ENCODE measurements at regions of chr7 and their contacts with region 1.

Region 1: DNA sequence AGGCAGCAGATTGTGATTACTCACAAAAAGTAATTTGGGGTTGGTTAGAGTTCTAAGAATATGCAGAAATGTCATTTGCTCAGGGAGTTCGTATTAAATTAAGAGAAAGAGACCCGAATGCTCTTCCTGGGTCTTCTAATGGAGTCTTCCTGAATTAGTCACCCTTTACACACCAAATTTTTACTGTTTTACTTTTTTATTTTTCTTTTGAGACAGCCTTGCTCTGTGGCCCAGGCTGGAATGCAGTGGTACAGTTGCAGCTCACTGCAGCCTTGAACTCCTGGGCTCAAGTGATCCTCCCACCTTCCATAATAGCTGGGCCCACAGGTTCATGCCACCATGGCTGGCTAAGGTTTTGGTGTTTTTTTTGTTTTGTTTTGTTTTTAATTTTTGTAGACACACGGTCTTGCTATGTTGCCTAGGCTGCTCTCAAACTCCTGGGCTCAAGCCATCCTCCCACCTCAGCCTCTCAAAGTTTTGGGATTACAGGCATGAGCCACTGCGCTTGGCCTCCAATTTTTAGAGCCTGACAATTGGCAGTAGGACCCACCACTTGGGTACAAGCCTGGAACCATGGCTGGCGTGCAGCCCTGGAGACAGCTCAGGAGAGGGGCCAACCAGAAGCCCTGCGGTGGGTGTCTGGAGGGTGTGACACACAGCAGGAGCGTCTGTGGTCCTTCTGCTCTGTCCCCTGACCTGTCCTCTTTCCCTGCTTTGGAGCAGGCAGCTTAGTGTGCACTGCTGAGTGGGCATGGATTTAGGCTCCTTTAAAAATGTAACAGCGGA is 16.4 kb upstream of the BHLHA15 start:
- DNase-seq: no peak
- H3K4me3 ChIP-seq: no peak overlapping the region
- H3K27ac ChIP-seq: no peak overlapping the region
- H3K4me1 ChIP-seq: peaks cover 0 to 30% (median 17%) of the 10 kb centered on the region in 6 donors
- H3K27me3 ChIP-seq: no peaks in the 10 kb centered on the region
- CTCF ChIP-seq: no peak
- POLR2A ChIP-seq: no peak

Region 2: GRCh38 chr7:98157761-98158160 is 37.1 kb before region 1 on chr7:
- intact Hi-C with region 1: no loop called
- DNase-seq: no peak
- H3K4me3 ChIP-seq: no peak overlapping the region
- H3K27ac ChIP-seq: no peak overlapping the region
- H3K4me1 ChIP-seq: peaks cover 0 to 6% (median 2%) of the 10 kb centered on the region in 6 donors
- H3K27me3 ChIP-seq: no peaks in the 10 kb centered on the region
- CTCF ChIP-seq: no peak
- POLR2A ChIP-seq: no peak

Region 3: GRCh38 chr7:98251841-98252639 is 57.2 kb after region 1 on chr7 and contains the start of gene TECPR1:
- intact Hi-C with region 1: loop called (anchors 10 kb)
- DNase-seq: peak; percentile 98
- H3K4me3 ChIP-seq: peak within 1 kb of the TSS; percentile 64 to 98 (median 92)
- H3K27ac ChIP-seq: peak within 1 kb of the TSS; percentile 79 to 93 (median 88)
- H3K4me1 ChIP-seq: peaks cover 35 to 89% (median 59%) of the 10 kb centered on the region in 6 donors
- H3K27me3 ChIP-seq: no peaks in the 10 kb centered on the region
- CTCF ChIP-seq: peak in 4 of 11 experiments; percentile 6 to 35 (median 19)
- POLR2A ChIP-seq: peak in 1 of 3 donors; percentile 7
- total RNA-seq, gene TECPR1: 19.0 to 86.4 (median 46.1) TPM